ENCODE measurements at regions of chr18 and their contacts with region 1.

Region 1: GRCh38 chr18:56645415-56646016 is 5.6 kb upstream of the WDR7 start:
- DNase-seq: peak; percentile 43
- ATAC-seq: no peak
- H3K4me3 ChIP-seq: no peak overlapping the region
- H3K4me3 Mint-ChIP-seq: no peak overlapping the region
- H3K27ac ChIP-seq: no peak overlapping the region
- H3K27ac Mint-ChIP-seq: no peak overlapping the region
- H3K4me1 ChIP-seq: peaks cover 2% of the 10 kb centered on the region in 2 donors
- H3K4me1 Mint-ChIP-seq: peaks cover 2% of the 10 kb centered on the region
- H3K27me3 ChIP-seq: no peaks in the 10 kb centered on the region
- H3K27me3 Mint-ChIP-seq: no peaks in the 10 kb centered on the region
- CTCF ChIP-seq: peak; percentile 76

Region 2: GRCh38 chr18:56831988-56832387 is 186.5 kb after region 1 on chr18:
- CTCF ChIA-PET with region 1: no interaction called
- POLR2A ChIA-PET with region 1: no interaction called
- intact Hi-C with region 1: no loop called
- DNase-seq: no peak
- ATAC-seq: no peak
- H3K4me3 ChIP-seq: no peak overlapping the region
- H3K4me3 Mint-ChIP-seq: no peak overlapping the region
- H3K27ac ChIP-seq: no peak overlapping the region
- H3K27ac Mint-ChIP-seq: no peak overlapping the region
- H3K4me1 ChIP-seq: no peaks in the 10 kb centered on the region
- H3K4me1 Mint-ChIP-seq: no peaks in the 10 kb centered on the region
- H3K27me3 ChIP-seq: no peaks in the 10 kb centered on the region
- H3K27me3 Mint-ChIP-seq: no peaks in the 10 kb centered on the region
- CTCF ChIP-seq: no peak

Region 3: GRCh38 chr18:56921896-56922480 is 276.5 kb after region 1 on chr18:
- CTCF ChIA-PET with region 1: no interaction called
- POLR2A ChIA-PET with region 1: interaction called, 14 read pairs
- intact Hi-C with region 1: no loop called
- DNase-seq: no peak
- ATAC-seq: no peak
- H3K4me3 ChIP-seq: no peak overlapping the region
- H3K4me3 Mint-ChIP-seq: no peak overlapping the region
- H3K27ac ChIP-seq: no peak overlapping the region
- H3K27ac Mint-ChIP-seq: no peak overlapping the region
- H3K4me1 ChIP-seq: peaks cover 4 to 5% of the 10 kb centered on the region in 2 donors
- H3K4me1 Mint-ChIP-seq: peaks cover 14% of the 10 kb centered on the region
- H3K27me3 ChIP-seq: no peaks in the 10 kb centered on the region
- H3K27me3 Mint-ChIP-seq: no peaks in the 10 kb centered on the region
- CTCF ChIP-seq: no peak